Gastrocnemius medialis (tissue), 4 donors: ENCODE measurements at regions of chr1 and their contacts with region 1.

Region 1: DNA sequence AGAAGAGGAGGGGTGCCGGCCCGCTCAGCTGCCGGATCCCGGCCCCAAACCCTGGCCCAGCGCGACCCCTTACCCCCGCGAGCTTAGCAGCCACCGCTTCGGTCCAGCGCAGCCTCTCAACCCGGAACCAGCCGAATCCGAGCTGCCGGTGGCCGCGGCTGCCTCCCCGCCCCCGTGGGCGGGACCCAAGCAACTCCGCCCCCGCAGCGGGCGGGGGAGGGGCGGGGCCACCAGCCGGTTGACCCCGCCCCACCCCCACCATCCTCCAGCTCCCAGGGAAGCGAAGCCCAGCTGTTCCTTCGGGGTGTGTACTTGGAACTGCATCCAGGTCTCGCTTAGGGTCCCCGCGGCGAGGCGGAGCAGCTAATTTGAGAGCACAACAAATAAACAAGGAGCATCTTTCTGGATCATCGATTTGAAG is at the start of gene TRIM62:
- DNase-seq: peak; percentile 76 to 85
- ATAC-seq: peak; percentile 73 to 80
- H3K4me3 ChIP-seq: peak within 1 kb of the TSS; percentile 80 to 89 (median 86)
- H3K27ac ChIP-seq: peak within 1 kb of the TSS; percentile 81 to 86 (median 84)
- H3K4me1 ChIP-seq: peaks cover 20 to 21% of the 10 kb centered on the region in 2 donors
- H3K27me3 ChIP-seq: no peaks in the 10 kb centered on the region
- CTCF ChIP-seq: no peak
- POLR2A ChIP-seq: peak; percentile 81 to 83
- total RNA-seq, gene TRIM62: 3.3 to 10.8 (median 7.4) TPM

Region 2: GRCh38 chr1:33255347-33256311 is 73.7 kb after region 1 on chr1:
- in situ Hi-C with region 1: no loop called
- intact Hi-C with region 1: loop called (anchors 2 kb)
- DNase-seq: peak; percentile 79 to 84
- ATAC-seq: peak; percentile 78 to 79
- H3K4me3 ChIP-seq: peak overlapping the region; percentile 53 to 76 (median 65)
- H3K27ac ChIP-seq: peak overlapping the region; percentile 92 to 97 (median 96)
- H3K4me1 ChIP-seq: peaks cover 34 to 37% of the 10 kb centered on the region in 2 donors
- H3K27me3 ChIP-seq: no peaks in the 10 kb centered on the region
- CTCF ChIP-seq: no peak
- POLR2A ChIP-seq: peak; percentile 76 to 79